Sciatic nerve (tissue), 2 donors: ENCODE measurements at regions of chr2 and their contacts with region 1.

Region 1: GRCh38 chr2:168424112-168424951 is 31.7 kb upstream of the CERS6 start:
- DNase-seq: no peak
- ATAC-seq: no peak

Region 2: DNA sequence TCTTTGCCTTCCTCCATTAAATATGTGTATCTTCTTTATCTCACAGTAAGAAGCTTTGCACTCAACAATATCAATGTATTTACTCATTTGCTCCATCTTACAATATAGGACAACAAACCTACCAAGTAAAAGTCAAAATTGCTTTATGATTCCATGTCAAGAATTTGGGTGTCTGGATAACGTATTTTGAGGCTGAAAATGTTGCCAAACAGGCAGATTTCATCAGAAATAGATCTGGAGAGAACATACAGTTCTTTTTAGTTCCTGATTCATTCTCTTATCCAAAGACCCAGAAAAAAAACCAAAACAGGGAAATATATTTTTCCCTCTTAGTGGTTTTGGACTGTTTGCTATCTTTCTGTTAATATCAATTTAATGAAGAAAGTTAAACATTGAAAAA is 798.0 kb before region 1 on chr2:
- intact Hi-C with region 1: loop called (anchors 5 kb)
- DNase-seq: no peak
- ATAC-seq: no peak

Region 3: GRCh38 chr2:168470320-168471162 is 46.2 kb after region 1 on chr2:
- intact Hi-C with region 1: no loop called
- DNase-seq: no peak
- ATAC-seq: no peak